Colonic mucosa (tissue), 4 donors: ENCODE measurements at regions of chr9 and their contacts with region 1.

Region 1: DNA sequence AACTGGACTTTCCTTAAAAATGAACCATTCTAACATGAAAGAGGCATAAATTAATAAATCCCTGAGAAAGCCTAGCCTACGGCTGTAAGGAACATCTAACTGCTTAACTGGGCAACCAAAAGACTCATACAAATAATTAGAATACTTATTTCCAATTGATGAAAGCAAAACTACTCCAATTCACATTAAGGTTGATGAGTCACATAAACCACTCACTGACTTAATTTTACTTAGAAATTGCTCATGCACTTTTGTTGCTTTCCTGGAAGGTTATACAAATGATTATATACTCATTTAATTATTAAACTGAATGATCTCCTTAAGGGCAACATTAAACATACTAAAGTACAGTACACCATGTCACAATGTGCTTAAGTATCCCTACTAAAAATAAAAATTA is 101.9 kb downstream of the NFIB start:
- DNase-seq: no peak
- H3K4me3 ChIP-seq: no peak overlapping the region
- H3K27ac ChIP-seq: peak overlapping the region; percentile 85
- H3K4me1 ChIP-seq: no peaks in the 10 kb centered on the region
- H3K27me3 ChIP-seq: no peaks in the 10 kb centered on the region
- CTCF ChIP-seq: no peak

Region 2: GRCh38 chr9:14314929-14315645 is 103.0 kb after region 1 on chr9:
- intact Hi-C with region 1: loop called (anchors 10 kb)
- DNase-seq: peak; percentile 93
- H3K4me3 ChIP-seq: peak overlapping the region; percentile 61
- H3K27ac ChIP-seq: peak overlapping the region; percentile 93
- H3K4me1 ChIP-seq: no peaks in the 10 kb centered on the region
- H3K27me3 ChIP-seq: no peaks in the 10 kb centered on the region
- CTCF ChIP-seq: no peak